Psoas muscle (tissue), 8 donors: ENCODE measurements at regions of chr14 and their contacts with region 1.

Region 1: DNA sequence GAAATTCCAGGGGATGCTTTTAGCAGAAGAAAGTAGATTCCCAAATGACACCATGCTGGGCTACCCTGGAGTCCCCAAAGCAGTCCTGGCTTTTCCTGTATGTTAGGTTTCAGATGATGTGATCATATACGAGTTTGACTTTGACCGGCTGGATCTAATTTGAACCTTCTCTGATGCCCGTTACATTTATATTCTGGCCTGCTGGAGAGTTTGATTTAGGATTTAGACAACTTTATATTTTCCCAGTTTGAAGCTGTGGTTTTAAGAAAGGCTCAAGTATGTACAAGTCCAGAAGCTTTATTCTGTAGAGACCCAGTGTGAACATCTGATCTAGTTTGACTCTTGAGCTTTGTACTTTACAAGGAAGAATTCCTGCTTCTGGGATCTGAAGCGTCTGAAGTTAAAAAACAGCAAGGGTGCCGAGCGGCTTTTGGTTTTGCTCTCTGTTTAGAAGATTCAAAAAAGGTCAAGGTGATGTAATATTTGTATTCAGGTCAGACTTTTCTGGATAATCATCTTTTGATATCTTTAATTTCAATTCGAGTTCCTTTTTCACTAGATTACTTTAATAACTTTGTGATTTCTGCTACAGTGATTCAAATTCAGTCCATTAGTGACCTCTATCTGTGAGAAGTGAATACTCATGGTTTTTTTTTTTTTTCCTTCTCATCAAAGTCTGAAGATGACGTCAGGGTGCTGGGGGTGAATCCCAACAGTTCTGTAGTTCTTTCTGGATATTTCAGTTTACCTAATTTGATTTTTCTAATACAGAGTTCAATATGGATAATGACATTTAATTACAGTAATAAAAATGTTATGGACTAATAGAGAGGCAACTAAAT is 6.3 kb downstream of the FLRT2 start:
- DNase-seq: no peak
- ATAC-seq: no peak
- H3K4me3 ChIP-seq: peak overlapping the region; percentile 77
- H3K27ac ChIP-seq: peak overlapping the region; percentile 83
- H3K4me1 ChIP-seq: no peaks in the 10 kb centered on the region
- H3K27me3 ChIP-seq: peaks cover 0 to 29% (median 2%) of the 10 kb centered on the region in 3 donors
- CTCF ChIP-seq: peak; percentile 39

Region 2: GRCh38 chr14:85572845-85573244 is 36.6 kb after region 1 on chr14:
- intact Hi-C with region 1: loop called (anchors 5 kb)
- DNase-seq: no peak
- ATAC-seq: no peak
- H3K4me3 ChIP-seq: no peak overlapping the region
- H3K27ac ChIP-seq: peak overlapping the region; percentile 72
- H3K4me1 ChIP-seq: peaks cover 15% of the 10 kb centered on the region
- H3K27me3 ChIP-seq: no peaks in the 10 kb centered on the region
- CTCF ChIP-seq: no peak